ENCODE measurements at regions of chr5 and their contacts with region 1.

Region 1: GRCh38 chr5:107519900-107520354 is 150.8 kb downstream of the EFNA5 start:
- DNase-seq: peak; percentile 64
- ATAC-seq: peak; percentile 66
- H3K4me3 ChIP-seq: peak overlapping the region; percentile 49
- H3K27ac ChIP-seq: peak overlapping the region; percentile 61
- H3K4me1 ChIP-seq: peaks cover 52% of the 10 kb centered on the region
- H3K27me3 ChIP-seq: no peaks in the 10 kb centered on the region
- CTCF ChIP-seq: no peak

Region 2: DNA sequence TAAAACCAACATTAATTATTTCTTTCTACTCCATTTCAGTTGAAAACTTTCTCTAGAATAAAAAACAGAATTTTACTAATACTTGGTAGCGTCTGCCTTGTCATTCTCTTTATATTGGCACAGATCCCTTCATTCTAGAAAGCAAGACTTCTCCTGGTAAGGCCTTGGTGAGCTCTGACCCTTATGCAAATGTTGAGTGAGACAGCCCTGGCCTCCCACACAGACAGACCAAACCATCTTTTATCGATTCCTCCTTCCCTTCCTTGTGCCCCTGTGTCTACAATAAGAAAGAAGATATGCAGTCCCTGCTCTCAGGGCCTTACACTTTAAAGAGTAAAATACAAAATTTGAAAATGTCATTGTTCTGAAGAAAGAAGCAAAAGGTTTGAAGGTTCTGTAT is 111.4 kb before region 1 on chr5:
- CTCF ChIA-PET with region 1: no interaction called
- POLR2A ChIA-PET with region 1: no interaction called
- intact Hi-C with region 1: no loop called
- DNase-seq: no peak
- ATAC-seq: no peak
- H3K4me3 ChIP-seq: no peak overlapping the region
- H3K27ac ChIP-seq: no peak overlapping the region
- H3K4me1 ChIP-seq: 0 out of 2 replicates have a peak, but pooled peaks cover 4% of the 10 kb centered on the region
- H3K27me3 ChIP-seq: no peaks in the 10 kb centered on the region
- CTCF ChIP-seq: no peak

Region 3: GRCh38 chr5:107425541-107426256 is 94.2 kb before region 1 on chr5:
- CTCF ChIA-PET with region 1: no interaction called
- POLR2A ChIA-PET with region 1: no interaction called
- intact Hi-C with region 1: loop called (anchors 5 kb)
- DNase-seq: peak; percentile 83
- ATAC-seq: peak; percentile 86
- H3K4me3 ChIP-seq: peak overlapping the region; percentile 38; the same call in 1 of the 2 replicates
- H3K27ac ChIP-seq: peak overlapping the region; percentile 89
- H3K4me1 ChIP-seq: peaks cover 40% of the 10 kb centered on the region
- H3K27me3 ChIP-seq: no peaks in the 10 kb centered on the region
- CTCF ChIP-seq: no peak

Region 4: GRCh38 chr5:107476783-107477182 is 43.1 kb before region 1 on chr5:
- CTCF ChIA-PET with region 1: no interaction called
- POLR2A ChIA-PET with region 1: no interaction called
- intact Hi-C with region 1: loop called (anchors 5 kb)
- DNase-seq: no peak
- ATAC-seq: no peak
- H3K4me3 ChIP-seq: no peak overlapping the region
- H3K27ac ChIP-seq: peak overlapping the region; percentile 32; the same call in 1 of the 2 replicates
- H3K4me1 ChIP-seq: peaks cover 55% of the 10 kb centered on the region
- H3K27me3 ChIP-seq: no peaks in the 10 kb centered on the region
- CTCF ChIP-seq: no peak

Region 5: GRCh38 chr5:107542428-107542827 is 22.5 kb after region 1 on chr5:
- CTCF ChIA-PET with region 1: no interaction called
- POLR2A ChIA-PET with region 1: no interaction called
- intact Hi-C with region 1: loop called (anchors 2 kb)
- DNase-seq: peak; percentile 96
- ATAC-seq: peak; percentile 93
- H3K4me3 ChIP-seq: peak overlapping the region; percentile 47
- H3K27ac ChIP-seq: peak overlapping the region; percentile 75
- H3K4me1 ChIP-seq: peaks cover 18% of the 10 kb centered on the region
- H3K27me3 ChIP-seq: no peaks in the 10 kb centered on the region
- CTCF ChIP-seq: no peak

Measured in PC-3 (cell line).